Naive thymus-derived CD8-positive, alpha-beta T cell (primary cell): ENCODE measurements at regions of chr17 and their contacts with region 1.

Region 1: GRCh38 chr17:1365445-1366039 is 34.5 kb downstream of the YWHAE start:
- DNase-seq: peak; percentile 21 to 79 (median 64)
- ATAC-seq: peak; percentile 61 to 69
- H3K4me3 Mint-ChIP-seq: peak overlapping the region in 6 of 10 donors; percentile 2 to 55 (median 18)
- H3K27ac Mint-ChIP-seq: peak overlapping the region in 8 of 10 donors; percentile 30 to 88 (median 66)
- H3K4me1 Mint-ChIP-seq: peaks cover 27 to 81% (median 64%) of the 10 kb centered on the region in 4 donors
- H3K27me3 Mint-ChIP-seq: no peaks in the 10 kb centered on the region

Region 2: GRCh38 chr17:1399679-1400512 is 34.4 kb after region 1 on chr17 and contains the start of gene YWHAE:
- POLR2A ChIA-PET with region 1: interaction called, 12 read pairs
- DNase-seq: peak; percentile 93 to 96 (median 94)
- ATAC-seq: peak; percentile 87 to 89
- H3K4me3 Mint-ChIP-seq: peak within 1 kb of the TSS; percentile 98 to 100 (median 99)
- H3K27ac Mint-ChIP-seq: peak within 1 kb of the TSS; percentile 95 to 100 (median 99)
- H3K4me1 Mint-ChIP-seq: peaks cover 22 to 44% (median 41%) of the 10 kb centered on the region in 4 donors
- H3K27me3 Mint-ChIP-seq: no peaks in the 10 kb centered on the region
- polyA plus RNA-seq, gene YWHAE: 28.3 to 34.2 (median 34.0) TPM